Activated CD8-positive, alpha-beta T cell treated with anti-CD3 and anti-CD28 coated beads for 36 hours (primary cell): ENCODE measurements at regions of chr17 and their contacts with region 1.

Region 1: GRCh38 chr17:33779225-33779591 is 475.9 kb upstream of the CCL2 start:
- DNase-seq: peak; percentile 44
- ATAC-seq: peak; percentile 45
- H3K4me3 Mint-ChIP-seq: no peak overlapping the region
- H3K27ac Mint-ChIP-seq: no peak overlapping the region
- H3K4me1 Mint-ChIP-seq: no peaks in the 10 kb centered on the region
- H3K27me3 Mint-ChIP-seq: peaks cover 22% of the 10 kb centered on the region
- CTCF ChIP-seq: peak; percentile 97

Region 2: DNA sequence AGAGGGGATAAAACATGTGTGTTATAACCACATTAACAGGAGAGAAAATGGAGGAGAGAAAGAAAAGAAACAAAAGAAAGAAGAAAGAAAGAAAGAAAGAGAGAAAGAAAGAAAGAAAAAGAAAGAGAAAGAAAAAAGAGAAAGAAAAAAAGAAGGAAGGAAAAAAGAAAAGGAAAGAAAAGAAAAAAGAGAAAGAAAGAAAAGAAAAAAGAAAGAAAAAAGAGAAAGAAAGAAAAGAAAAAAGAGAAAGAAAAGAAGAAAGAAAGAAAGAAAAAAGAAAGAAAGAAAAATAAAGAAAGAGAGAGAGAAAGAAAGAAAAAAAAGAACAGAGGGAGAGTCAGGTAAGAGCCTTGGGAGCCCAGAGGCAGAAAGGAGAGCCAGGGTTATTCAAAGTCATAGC is 39.5 kb before region 1 on chr17:
- CTCF ChIA-PET with region 1: no interaction called
- POLR2A ChIA-PET with region 1: no interaction called
- intact Hi-C with region 1: no loop called
- DNase-seq: no peak
- ATAC-seq: no peak
- H3K4me3 Mint-ChIP-seq: no peak overlapping the region
- H3K27ac Mint-ChIP-seq: no peak overlapping the region
- H3K4me1 Mint-ChIP-seq: no peaks in the 10 kb centered on the region
- H3K27me3 Mint-ChIP-seq: peaks cover 10% of the 10 kb centered on the region
- CTCF ChIP-seq: peak; percentile 54

Region 3: DNA sequence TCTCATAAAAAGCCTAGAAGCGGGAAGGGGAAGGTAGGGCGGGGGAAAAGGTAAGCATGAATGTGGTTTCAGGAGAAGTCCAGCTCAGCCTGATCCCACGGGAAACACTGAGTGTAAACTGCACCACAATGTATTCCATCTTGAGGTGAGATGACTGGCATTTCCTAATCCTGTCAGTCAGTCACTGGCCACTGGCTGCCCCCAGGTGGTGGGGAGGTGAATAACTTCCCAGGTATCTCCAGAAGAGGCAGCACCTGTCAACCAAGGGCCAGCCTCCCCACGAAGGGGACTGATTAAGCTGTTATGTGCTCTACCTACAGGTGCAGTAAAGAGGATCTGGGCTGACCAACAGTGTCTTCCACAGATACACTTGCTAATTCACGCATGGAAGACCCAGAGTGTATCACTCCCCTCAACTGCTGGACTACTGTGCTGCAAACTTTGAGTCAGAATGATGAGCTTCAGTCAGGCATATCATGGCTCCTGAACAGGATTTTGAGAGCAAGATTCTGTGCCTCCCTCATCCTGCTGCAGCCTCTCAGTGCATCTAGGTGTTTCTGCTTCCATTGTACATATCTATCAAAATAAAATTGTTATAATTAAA is 367.3 kb after region 1 on chr17:
- CTCF ChIA-PET with region 1: interaction called, 36 read pairs
- POLR2A ChIA-PET with region 1: no interaction called
- intact Hi-C with region 1: loop called (anchors 5 kb)
- DNase-seq: peak; percentile 79
- ATAC-seq: peak; percentile 67
- H3K4me3 Mint-ChIP-seq: no peak overlapping the region
- H3K27ac Mint-ChIP-seq: no peak overlapping the region
- H3K4me1 Mint-ChIP-seq: no peaks in the 10 kb centered on the region
- H3K27me3 Mint-ChIP-seq: peaks cover 11% of the 10 kb centered on the region
- CTCF ChIP-seq: peak; percentile 64